HCT116 (cell line): ENCODE measurements at regions of chr14 and their contacts with region 1.

Region 1: DNA sequence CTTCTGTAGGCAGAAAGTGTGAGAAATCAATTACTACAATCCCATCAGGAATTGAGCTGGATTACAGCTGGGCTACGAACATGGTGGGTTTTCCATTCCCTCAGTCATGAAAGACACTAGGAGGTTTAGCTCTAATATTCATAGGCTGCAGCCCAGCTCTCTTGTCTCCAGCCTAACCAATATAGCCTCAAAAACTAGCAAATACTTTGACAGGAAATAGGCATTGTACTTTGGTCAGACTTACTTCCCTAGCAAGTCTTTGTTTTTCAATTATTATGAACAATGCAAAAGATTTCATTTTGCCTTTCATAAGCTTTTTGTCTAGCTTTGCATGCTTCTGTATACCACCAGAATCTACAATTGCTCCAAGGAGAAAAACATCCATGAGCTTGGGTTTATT is 296.2 kb downstream of the GPHN start:
- DNase-seq: no peak
- ATAC-seq: no peak
- H3K4me3 ChIP-seq: no peak overlapping the region
- H3K27ac ChIP-seq: no peak overlapping the region
- H3K4me1 ChIP-seq: no peaks in the 10 kb centered on the region
- H3K27me3 ChIP-seq: no peaks in the 10 kb centered on the region
- CTCF ChIP-seq: no peak
- POLR2A ChIP-seq: no peak
- RAD21 ChIP-seq: no peak

Region 2: DNA sequence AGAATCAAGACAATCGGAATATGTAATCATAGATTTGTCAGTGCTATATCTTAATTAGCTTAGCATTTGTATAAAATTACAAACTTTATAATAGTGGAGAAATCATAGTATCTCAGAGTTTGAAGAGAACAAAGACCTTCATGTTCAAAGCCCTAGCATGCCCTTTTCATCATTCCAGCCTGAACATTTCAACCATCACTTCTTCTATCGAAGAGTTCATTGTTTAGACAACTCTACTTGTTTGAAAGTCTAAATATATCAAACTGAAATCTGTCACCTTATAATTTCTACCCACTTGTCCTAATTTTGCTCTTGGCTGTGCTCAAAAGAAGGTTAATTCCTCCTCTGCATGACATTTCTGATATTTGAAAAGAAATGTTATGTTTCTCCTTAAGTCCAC is 29.7 kb after region 1 on chr14:
- CTCF ChIA-PET with region 1: no interaction called
- POLR2A ChIA-PET with region 1: no interaction called
- RAD21 ChIA-PET with region 1: no interaction called
- intact Hi-C with region 1: loop called (anchors 5 kb)
- DNase-seq: no peak
- ATAC-seq: no peak
- H3K4me3 ChIP-seq: no peak overlapping the region
- H3K27ac ChIP-seq: no peak overlapping the region
- H3K4me1 ChIP-seq: no peaks in the 10 kb centered on the region
- H3K27me3 ChIP-seq: no peaks in the 10 kb centered on the region
- CTCF ChIP-seq: no peak
- POLR2A ChIP-seq: no peak
- RAD21 ChIP-seq: no peak

Region 3: GRCh38 chr14:66920196-66920595 is 116.1 kb after region 1 on chr14:
- CTCF ChIA-PET with region 1: no interaction called
- POLR2A ChIA-PET with region 1: no interaction called
- RAD21 ChIA-PET with region 1: no interaction called
- intact Hi-C with region 1: no loop called
- DNase-seq: no peak
- ATAC-seq: no peak
- H3K4me3 ChIP-seq: no peak overlapping the region
- H3K27ac ChIP-seq: no peak overlapping the region
- H3K4me1 ChIP-seq: no peaks in the 10 kb centered on the region
- H3K27me3 ChIP-seq: no peaks in the 10 kb centered on the region
- CTCF ChIP-seq: no peak
- POLR2A ChIP-seq: no peak
- RAD21 ChIP-seq: no peak